ENCODE measurements at regions of chr20 and their contacts with region 1.

Region 1: GRCh38 chr20:47610247-47610944 is 108.7 kb downstream of the NCOA3 start:
- DNase-seq: peak in 1 of 2 donors; percentile 13
- ATAC-seq: peak; percentile 86 to 90
- H3K4me3 ChIP-seq: no peak overlapping the region
- H3K27ac ChIP-seq: peak overlapping the region in 3 of 4 donors; percentile 32 to 52 (median 36)
- H3K4me1 ChIP-seq: peaks cover 17 to 56% of the 10 kb centered on the region in 2 donors
- H3K27me3 ChIP-seq: no peaks in the 10 kb centered on the region
- CTCF ChIP-seq: no peak
- POLR2A ChIP-seq: no peak

Region 2: GRCh38 chr20:47272893-47273590 is 337.4 kb before region 1 on chr20:
- in situ Hi-C with region 1: loop called in 2 of 4 experiments (anchors 10 to 25 kb)
- intact Hi-C with region 1: no loop called
- DNase-seq: peak in 1 of 2 donors; percentile 23
- ATAC-seq: peak; percentile 69 to 78
- H3K4me3 ChIP-seq: no peak overlapping the region
- H3K27ac ChIP-seq: peak overlapping the region; percentile 63 to 80 (median 78)
- H3K4me1 ChIP-seq: peaks cover 32 to 37% of the 10 kb centered on the region in 2 donors
- H3K27me3 ChIP-seq: no peaks in the 10 kb centered on the region
- CTCF ChIP-seq: peak; percentile 88 to 95 (median 93)
- POLR2A ChIP-seq: no peak

Region 3: DNA sequence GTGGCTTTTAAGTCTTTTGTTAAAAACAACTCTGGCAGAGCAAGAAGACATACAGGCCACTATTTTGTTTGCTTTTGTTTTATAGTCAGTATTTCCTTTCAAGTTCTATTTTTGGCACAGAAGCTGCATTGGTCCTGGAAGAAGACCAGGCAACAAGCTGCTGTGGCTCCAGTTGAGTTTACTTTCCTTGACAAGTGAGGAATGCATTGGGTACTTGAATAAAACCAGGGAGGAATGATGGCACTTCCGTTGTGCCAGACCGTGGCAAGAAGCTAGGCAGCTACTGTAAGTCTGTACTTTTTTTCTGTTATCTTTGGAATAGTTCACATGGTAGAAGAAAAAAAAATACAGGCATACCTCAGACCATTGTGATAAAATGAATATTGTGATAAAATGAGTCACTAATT is 42.4 kb before region 1 on chr20:
- in situ Hi-C with region 1: no loop called
- intact Hi-C with region 1: loop called (anchors 5 kb)
- DNase-seq: no peak
- ATAC-seq: peak in 1 of 2 donors; percentile 11
- H3K4me3 ChIP-seq: no peak overlapping the region
- H3K27ac ChIP-seq: peak overlapping the region; percentile 55 to 88 (median 83)
- H3K4me1 ChIP-seq: peaks cover 51 to 57% of the 10 kb centered on the region in 2 donors
- H3K27me3 ChIP-seq: no peaks in the 10 kb centered on the region
- CTCF ChIP-seq: no peak
- POLR2A ChIP-seq: no peak